ENCODE measurements at regions of chr5 and their contacts with region 1.

Region 1: GRCh38 chr5:98454904-98455303 is 318.6 kb upstream of the RGMB start:
- DNase-seq: peak; percentile 80
- H3K4me3 ChIP-seq: peak overlapping the region in 1 of 3 experiments; percentile 53
- H3K27ac ChIP-seq: peak overlapping the region; percentile 72
- H3K4me1 ChIP-seq: peaks cover 19% of the 10 kb centered on the region
- H3K27me3 ChIP-seq: no peaks in the 10 kb centered on the region
- CTCF ChIP-seq: peak in 1 of 2 donors; percentile 4
- POLR2A ChIP-seq: no peak

Region 2: DNA sequence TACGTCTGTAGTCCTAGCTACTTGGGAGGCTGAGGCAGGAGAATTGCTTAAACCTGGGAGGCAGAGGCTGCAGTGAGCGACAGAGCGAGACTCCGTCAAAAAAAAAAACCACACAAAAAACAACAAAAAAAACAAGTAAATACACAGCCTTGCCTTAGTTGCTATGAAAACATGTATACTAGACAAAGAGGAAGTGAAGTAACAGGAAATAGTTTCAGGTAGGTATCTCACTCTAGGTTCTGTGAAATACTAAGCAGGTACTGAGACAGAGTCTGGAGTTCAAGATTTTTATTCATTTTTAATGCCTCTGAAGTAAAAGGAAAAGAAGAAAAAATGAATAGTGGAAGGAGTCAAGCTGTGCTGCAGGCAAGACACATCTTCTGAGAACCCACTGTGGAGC is 369.3 kb before region 1 on chr5:
- CTCF ChIA-PET with region 1: no interaction called
- POLR2A ChIA-PET with region 1: no interaction called
- dilution Hi-C with region 1: no loop called
- intact Hi-C with region 1: no loop called
- DNase-seq: no peak
- H3K4me3 ChIP-seq: no peak overlapping the region
- H3K27ac ChIP-seq: no peak overlapping the region
- H3K4me1 ChIP-seq: no peaks in the 10 kb centered on the region
- H3K27me3 ChIP-seq: no peaks in the 10 kb centered on the region
- CTCF ChIP-seq: no peak
- POLR2A ChIP-seq: no peak

Region 3: DNA sequence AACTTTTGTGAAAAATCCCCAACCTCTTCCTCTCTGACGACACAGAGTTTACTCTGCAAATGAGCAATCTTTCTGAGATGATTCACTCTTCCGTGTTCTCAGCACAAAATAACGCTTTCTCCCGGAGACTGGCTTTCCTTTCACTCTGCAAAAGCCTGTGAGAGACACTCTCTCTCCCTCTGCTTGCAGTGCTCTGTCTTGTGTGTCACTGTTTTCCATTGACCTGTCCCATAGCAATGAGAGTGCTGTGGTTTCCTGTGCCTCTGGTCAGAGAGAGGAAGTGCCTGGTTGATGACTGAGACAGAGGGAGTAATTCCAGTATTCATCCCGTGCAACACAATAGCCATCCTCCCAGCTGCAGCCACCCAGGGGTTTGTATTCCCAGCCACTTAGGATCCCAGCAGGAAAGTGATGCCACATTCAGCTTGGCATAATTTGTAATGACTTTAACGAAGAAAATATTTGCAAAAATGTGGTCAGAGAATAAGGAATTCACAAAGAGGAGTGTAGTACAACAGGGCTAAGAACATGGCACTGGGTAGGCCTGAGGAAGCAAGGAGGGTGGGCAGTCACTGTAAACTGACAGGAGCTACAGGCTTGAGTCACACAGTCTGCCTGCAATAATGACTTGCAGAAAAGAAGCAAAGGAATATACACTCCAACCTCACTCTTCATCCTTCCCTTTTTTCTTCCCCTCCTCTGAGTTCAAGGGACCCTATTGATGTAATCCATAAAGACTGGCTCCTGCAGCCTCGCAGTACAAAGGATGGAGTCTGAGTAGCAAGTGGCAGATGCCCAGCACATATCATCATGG is 144.9 kb before region 1 on chr5:
- CTCF ChIA-PET with region 1: no interaction called
- POLR2A ChIA-PET with region 1: no interaction called
- dilution Hi-C with region 1: no loop called
- intact Hi-C with region 1: loop called (anchors 1 kb)
- DNase-seq: peak; percentile 95
- H3K4me3 ChIP-seq: peak overlapping the region in 2 of 3 experiments; percentile 10 to 72
- H3K27ac ChIP-seq: peak overlapping the region; percentile 97
- H3K4me1 ChIP-seq: peaks cover 63% of the 10 kb centered on the region
- H3K27me3 ChIP-seq: no peaks in the 10 kb centered on the region
- CTCF ChIP-seq: no peak
- POLR2A ChIP-seq: no peak

Measured in endothelial cell of umbilical vein (primary cell).